ENCODE measurements at regions of chr12 and their contacts with region 1.

Region 1: GRCh38 chr12:123271001-123271729 is 491 bp downstream of the CDK2AP1 start:
- DNase-seq: peak; percentile 88
- H3K4me3 ChIP-seq: peak overlapping the region; percentile 63 to 91 (median 80)
- H3K27ac ChIP-seq: peak overlapping the region; percentile 84 to 90 (median 86)
- H3K4me1 ChIP-seq: peaks cover 0 to 44% (median 38%) of the 10 kb centered on the region in 4 donors
- H3K27me3 ChIP-seq: no peaks in the 10 kb centered on the region
- CTCF ChIP-seq: no peak
- EP300 ChIP-seq: no peak
- POLR2A ChIP-seq: no peak

Region 2: GRCh38 chr12:123388177-123388947 is 117.2 kb after region 1 on chr12:
- intact Hi-C with region 1: loop called (anchors 2 kb)
- DNase-seq: peak; percentile 88
- H3K4me3 ChIP-seq: peak overlapping the region; percentile 39 to 75 (median 68)
- H3K27ac ChIP-seq: peak overlapping the region; percentile 92 to 95 (median 94)
- H3K4me1 ChIP-seq: peaks cover 0 to 53% (median 45%) of the 10 kb centered on the region in 4 donors
- H3K27me3 ChIP-seq: no peaks in the 10 kb centered on the region
- CTCF ChIP-seq: no peak
- EP300 ChIP-seq: no peak
- POLR2A ChIP-seq: no peak